CD4-positive, alpha-beta memory T cell (primary cell): ENCODE measurements at regions of chr15 and their contacts with region 1.

Region 1: DNA sequence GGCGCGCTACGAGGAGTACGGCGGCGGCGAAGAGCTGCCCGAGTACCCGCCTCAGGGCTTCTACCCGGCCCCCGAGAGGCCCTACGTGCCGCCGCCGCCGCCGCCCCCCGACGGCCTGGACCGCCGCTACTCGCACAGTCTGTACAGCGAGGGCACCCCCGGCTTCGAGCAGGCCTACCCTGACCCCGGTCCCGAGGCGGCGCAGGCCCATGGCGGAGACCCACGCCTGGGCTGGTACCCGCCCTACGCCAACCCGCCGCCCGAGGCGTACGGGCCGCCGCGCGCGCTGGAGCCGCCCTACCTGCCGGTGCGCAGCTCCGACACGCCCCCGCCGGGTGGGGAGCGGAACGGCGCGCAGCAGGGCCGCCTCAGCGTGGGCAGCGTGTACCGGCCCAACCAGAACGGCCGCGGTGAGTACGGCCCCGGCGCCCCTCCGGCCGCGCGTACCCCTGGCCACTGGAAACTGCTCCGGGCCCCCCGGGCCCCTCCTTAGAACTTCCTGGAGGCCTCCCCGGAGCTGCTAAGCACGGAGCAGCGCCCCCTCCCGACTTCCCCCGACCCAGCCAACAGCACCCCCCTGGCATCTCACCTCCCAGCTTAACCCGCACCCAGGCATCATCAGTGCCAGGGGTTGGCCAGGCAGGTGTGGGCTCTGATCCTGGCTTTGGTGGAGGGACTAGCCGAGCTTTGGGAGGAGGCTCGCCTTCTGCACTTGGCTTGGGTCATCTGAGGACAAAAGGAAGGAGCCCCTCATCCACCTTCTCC is 1.4 kb downstream of the LOXL1 start:
- DNase-seq: peak; percentile 80 to 87 (median 84)
- H3K4me3 ChIP-seq: peak overlapping the region in 1 of 2 donors; percentile 58
- H3K4me3 Mint-ChIP-seq: peak overlapping the region; percentile 76 to 89 (median 84)
- H3K27ac ChIP-seq: peak overlapping the region; percentile 77
- H3K27ac Mint-ChIP-seq: peak overlapping the region; percentile 41 to 92 (median 85)
- H3K4me1 ChIP-seq: peaks cover 66% of the 10 kb centered on the region
- H3K4me1 Mint-ChIP-seq: peaks cover 30 to 67% (median 48%) of the 10 kb centered on the region in 4 donors
- H3K27me3 ChIP-seq: no peaks in the 10 kb centered on the region
- H3K27me3 Mint-ChIP-seq: no peaks in the 10 kb centered on the region

Region 2: GRCh38 chr15:73771380-73772045 is 156.1 kb before region 1 on chr15:
- CTCF ChIA-PET with region 1: no interaction called
- POLR2A ChIA-PET with region 1: no interaction called
- intact Hi-C with region 1: no loop called
- DNase-seq: no peak
- H3K4me3 ChIP-seq: no peak overlapping the region
- H3K4me3 Mint-ChIP-seq: no peak overlapping the region
- H3K27ac ChIP-seq: no peak overlapping the region
- H3K27ac Mint-ChIP-seq: no peak overlapping the region
- H3K4me1 ChIP-seq: no peaks in the 10 kb centered on the region
- H3K4me1 Mint-ChIP-seq: peaks cover 0 to 2% (median 0%) of the 10 kb centered on the region in 4 donors
- H3K27me3 ChIP-seq: no peaks in the 10 kb centered on the region
- H3K27me3 Mint-ChIP-seq: peaks cover 8 to 23% of the 10 kb centered on the region in 2 donors

Region 3: GRCh38 chr15:73908030-73908821 is 19.4 kb before region 1 on chr15:
- CTCF ChIA-PET with region 1: interaction called, 20 read pairs
- POLR2A ChIA-PET with region 1: interaction called, 7 read pairs
- intact Hi-C with region 1: no loop called
- DNase-seq: peak; percentile 57 to 67 (median 62)
- H3K4me3 ChIP-seq: no peak overlapping the region
- H3K4me3 Mint-ChIP-seq: no peak overlapping the region
- H3K27ac ChIP-seq: no peak overlapping the region
- H3K27ac Mint-ChIP-seq: peak overlapping the region in 3 of 7 donors; percentile 63 to 85 (median 77)
- H3K4me1 ChIP-seq: no peaks in the 10 kb centered on the region
- H3K4me1 Mint-ChIP-seq: peaks cover 0 to 8% (median 3%) of the 10 kb centered on the region in 4 donors
- H3K27me3 ChIP-seq: no peaks in the 10 kb centered on the region
- H3K27me3 Mint-ChIP-seq: no peaks in the 10 kb centered on the region

Region 4: DNA sequence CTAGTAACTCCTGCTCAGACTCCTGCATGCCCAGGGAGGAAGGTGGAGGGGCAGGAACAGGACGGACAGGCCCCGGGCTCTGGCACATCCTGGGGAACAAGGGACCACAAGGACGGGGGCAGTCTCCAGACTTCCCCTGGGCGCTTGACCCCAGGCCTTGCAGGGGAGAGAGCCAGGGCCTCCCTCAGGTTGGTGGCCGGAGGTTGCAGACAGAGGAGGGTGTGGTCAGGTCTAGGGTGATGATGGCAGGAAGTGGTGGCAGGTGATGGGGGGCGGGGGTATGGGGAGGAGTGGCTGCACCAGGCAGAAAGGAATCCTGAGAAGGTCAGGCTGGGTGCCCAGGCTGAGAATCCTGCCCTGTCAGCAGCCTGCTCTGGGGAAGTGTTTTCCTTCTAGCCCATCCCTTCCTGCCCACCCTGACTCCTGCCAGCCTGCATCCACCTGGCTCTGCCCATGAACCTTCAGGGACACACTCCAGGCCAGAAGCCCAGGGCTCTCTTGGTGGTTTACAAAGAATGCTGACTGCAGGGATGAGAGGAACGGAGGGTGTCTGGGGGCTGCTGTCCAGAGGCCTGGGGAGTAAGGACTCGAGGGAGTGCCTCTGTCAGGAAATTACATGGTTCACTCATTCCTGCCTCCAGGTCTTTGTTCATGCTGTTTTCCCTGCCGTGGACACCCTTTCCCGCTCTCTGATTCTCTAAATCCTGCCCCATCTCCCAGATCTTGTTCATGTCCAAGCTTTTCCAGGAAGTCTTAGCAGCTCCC is 14.4 kb after region 1 on chr15:
- CTCF ChIA-PET with region 1: interaction called, 21 read pairs
- POLR2A ChIA-PET with region 1: interaction called, 12 read pairs
- intact Hi-C with region 1: no loop called
- DNase-seq: peak in 4 of 5 donors; percentile 17 to 43 (median 26)
- H3K4me3 ChIP-seq: no peak overlapping the region
- H3K4me3 Mint-ChIP-seq: peak overlapping the region in 6 of 8 donors; percentile 17 to 60 (median 48)
- H3K27ac ChIP-seq: no peak overlapping the region
- H3K27ac Mint-ChIP-seq: peak overlapping the region; percentile 48 to 87 (median 78)
- H3K4me1 ChIP-seq: peaks cover 32% of the 10 kb centered on the region
- H3K4me1 Mint-ChIP-seq: peaks cover 23 to 53% (median 32%) of the 10 kb centered on the region in 4 donors
- H3K27me3 ChIP-seq: no peaks in the 10 kb centered on the region
- H3K27me3 Mint-ChIP-seq: no peaks in the 10 kb centered on the region

Region 5: GRCh38 chr15:73956739-73957051 is 29.0 kb after region 1 on chr15:
- CTCF ChIA-PET with region 1: interaction called, 16 read pairs
- POLR2A ChIA-PET with region 1: interaction called, 7 read pairs
- intact Hi-C with region 1: no loop called
- DNase-seq: no peak
- H3K4me3 ChIP-seq: no peak overlapping the region
- H3K4me3 Mint-ChIP-seq: no peak overlapping the region
- H3K27ac ChIP-seq: no peak overlapping the region
- H3K27ac Mint-ChIP-seq: peak overlapping the region in 2 of 7 donors; percentile 37 to 65
- H3K4me1 ChIP-seq: peaks cover 26% of the 10 kb centered on the region
- H3K4me1 Mint-ChIP-seq: peaks cover 18 to 40% (median 31%) of the 10 kb centered on the region in 4 donors
- H3K27me3 ChIP-seq: no peaks in the 10 kb centered on the region
- H3K27me3 Mint-ChIP-seq: no peaks in the 10 kb centered on the region

Region 6: DNA sequence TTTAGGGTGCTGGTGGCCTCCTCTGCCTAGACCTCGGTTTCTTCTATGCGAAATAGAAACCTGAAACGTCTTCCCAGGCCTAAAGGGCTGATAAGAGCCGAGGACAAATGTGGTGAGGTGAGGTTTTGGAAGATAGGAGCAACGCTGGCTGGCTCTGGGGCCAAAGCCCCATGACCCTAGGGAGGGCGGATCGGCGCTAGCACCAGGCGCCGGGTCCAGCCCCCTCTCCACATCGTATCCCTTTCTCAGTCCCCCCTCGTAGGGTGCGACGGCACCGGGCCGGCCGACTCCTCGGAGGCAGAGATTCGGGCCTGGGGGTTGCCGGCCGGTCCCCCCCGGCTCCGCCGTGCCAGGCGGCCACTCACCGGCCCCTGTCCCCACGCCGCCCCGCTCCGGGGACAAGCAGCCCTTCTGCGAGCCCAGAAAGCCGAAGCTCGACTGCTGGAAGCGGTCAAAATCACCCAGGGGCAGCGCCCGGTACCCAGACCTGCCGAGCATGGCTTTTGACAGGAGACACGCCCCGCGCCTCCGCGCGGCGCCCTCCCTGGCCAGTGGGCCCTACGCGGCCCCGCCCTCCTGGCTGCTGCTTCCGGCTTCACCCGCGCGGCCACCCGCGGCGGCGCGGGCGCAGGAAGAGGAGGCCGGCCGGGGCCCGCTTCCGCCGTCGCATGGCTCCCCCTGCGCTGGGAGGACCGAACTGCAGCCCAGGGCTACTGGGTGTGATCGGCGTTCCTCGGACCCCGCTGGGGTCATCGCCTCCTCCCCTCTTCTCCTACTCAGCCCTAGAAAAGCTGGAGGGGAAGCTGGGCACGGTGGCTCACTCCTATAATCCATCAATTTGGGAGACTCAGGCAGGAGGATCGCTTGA is 64.3 kb after region 1 on chr15 and contains the start of gene STOML1:
- CTCF ChIA-PET with region 1: interaction called, 3 read pairs
- POLR2A ChIA-PET with region 1: interaction called, 10 read pairs
- intact Hi-C with region 1: loop called (anchors 2 kb)
- DNase-seq: peak; percentile 91 to 94 (median 91)
- H3K4me3 ChIP-seq: peak within 1 kb of the TSS; percentile 66 to 72
- H3K4me3 Mint-ChIP-seq: peak within 1 kb of the TSS; percentile 80 to 99 (median 84)
- H3K27ac ChIP-seq: peak within 1 kb of the TSS; percentile 67
- H3K27ac Mint-ChIP-seq: peak within 1 kb of the TSS; percentile 75 to 90 (median 86)
- H3K4me1 ChIP-seq: peaks cover 42% of the 10 kb centered on the region
- H3K4me1 Mint-ChIP-seq: peaks cover 26 to 59% (median 39%) of the 10 kb centered on the region in 4 donors
- H3K27me3 ChIP-seq: no peaks in the 10 kb centered on the region
- H3K27me3 Mint-ChIP-seq: no peaks in the 10 kb centered on the region
- total RNA-seq, gene STOML1: 10.8 to 11.1 TPM